ENCODE measurements at regions of chrX and their contacts with region 1.

Region 1: DNA sequence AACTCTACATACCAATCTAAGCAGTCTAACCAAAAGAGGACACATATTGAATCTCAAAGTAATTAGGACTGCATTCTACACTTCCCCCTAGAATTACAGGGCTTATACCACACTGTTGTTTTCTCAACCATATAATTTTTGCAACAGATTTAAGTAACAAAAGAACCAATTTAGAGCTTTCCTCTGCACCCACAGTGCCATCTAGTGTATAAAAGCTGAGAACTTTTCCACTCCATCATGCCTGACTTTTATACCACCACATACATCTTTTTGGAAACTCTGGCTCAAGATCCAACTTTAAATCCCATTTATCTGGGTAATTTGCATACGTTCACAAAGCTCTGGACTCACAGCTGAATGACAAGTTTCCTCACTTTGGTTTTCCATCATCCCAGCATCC is 99.5 kb downstream of the EFHC2 start:
- DNase-seq: peak in 2 of 9 experiments; percentile 39 to 55
- ATAC-seq: no peak
- H3K4me3 ChIP-seq: no peak overlapping the region
- H3K4me3 Mint-ChIP-seq: no peak overlapping the region
- H3K27ac ChIP-seq: no peak overlapping the region
- H3K27ac Mint-ChIP-seq: no peak overlapping the region
- H3K4me1 ChIP-seq: peaks cover 15% of the 10 kb centered on the region
- H3K4me1 Mint-ChIP-seq: peaks cover 28% of the 10 kb centered on the region
- H3K27me3 ChIP-seq: no peaks in the 10 kb centered on the region
- H3K27me3 Mint-ChIP-seq: no peaks in the 10 kb centered on the region
- CTCF ChIP-seq: peak; percentile 62

Region 2: GRCh38 chrX:43836435-43837184 is 407.4 kb before region 1 on chrX:
- CTCF ChIA-PET with region 1: interaction called, 7 read pairs
- POLR2A ChIA-PET with region 1: no interaction called
- intact Hi-C with region 1: loop called (anchors 2 kb)
- DNase-seq: peak in 2 of 9 experiments; percentile 15 to 36
- ATAC-seq: no peak
- H3K4me3 ChIP-seq: no peak overlapping the region
- H3K4me3 Mint-ChIP-seq: no peak overlapping the region
- H3K27ac ChIP-seq: no peak overlapping the region
- H3K27ac Mint-ChIP-seq: no peak overlapping the region
- H3K4me1 ChIP-seq: no peaks in the 10 kb centered on the region
- H3K4me1 Mint-ChIP-seq: no peaks in the 10 kb centered on the region
- H3K27me3 ChIP-seq: no peaks in the 10 kb centered on the region
- H3K27me3 Mint-ChIP-seq: no peaks in the 10 kb centered on the region
- CTCF ChIP-seq: peak; percentile 65

Region 3: GRCh38 chrX:43949669-43950068 is 294.3 kb before region 1 on chrX:
- CTCF ChIA-PET with region 1: interaction called, 10 read pairs
- POLR2A ChIA-PET with region 1: no interaction called
- intact Hi-C with region 1: no loop called
- DNase-seq: peak in 7 of 9 experiments; percentile 17 to 63 (median 27)
- ATAC-seq: peak; percentile 42
- H3K4me3 ChIP-seq: no peak overlapping the region
- H3K4me3 Mint-ChIP-seq: peak overlapping the region; percentile 47
- H3K27ac ChIP-seq: no peak overlapping the region
- H3K27ac Mint-ChIP-seq: no peak overlapping the region
- H3K4me1 ChIP-seq: no peaks in the 10 kb centered on the region
- H3K4me1 Mint-ChIP-seq: peaks cover 7% of the 10 kb centered on the region
- H3K27me3 ChIP-seq: no peaks in the 10 kb centered on the region
- H3K27me3 Mint-ChIP-seq: peaks cover 5% of the 10 kb centered on the region
- CTCF ChIP-seq: peak; percentile 24

Region 4: GRCh38 chrX:43958529-43958928 is 285.5 kb before region 1 on chrX:
- CTCF ChIA-PET with region 1: interaction called, 39 read pairs
- POLR2A ChIA-PET with region 1: interaction called, 7 read pairs
- intact Hi-C with region 1: loop called (anchors 1 kb)
- DNase-seq: peak in 4 of 9 experiments; percentile 0 to 76 (median 39)
- ATAC-seq: peak; percentile 55
- H3K4me3 ChIP-seq: no peak overlapping the region
- H3K4me3 Mint-ChIP-seq: no peak overlapping the region
- H3K27ac ChIP-seq: no peak overlapping the region
- H3K27ac Mint-ChIP-seq: no peak overlapping the region
- H3K4me1 ChIP-seq: no peaks in the 10 kb centered on the region
- H3K4me1 Mint-ChIP-seq: no peaks in the 10 kb centered on the region
- H3K27me3 ChIP-seq: no peaks in the 10 kb centered on the region
- H3K27me3 Mint-ChIP-seq: peaks cover 3% of the 10 kb centered on the region
- CTCF ChIP-seq: peak; percentile 69

Region 5: DNA sequence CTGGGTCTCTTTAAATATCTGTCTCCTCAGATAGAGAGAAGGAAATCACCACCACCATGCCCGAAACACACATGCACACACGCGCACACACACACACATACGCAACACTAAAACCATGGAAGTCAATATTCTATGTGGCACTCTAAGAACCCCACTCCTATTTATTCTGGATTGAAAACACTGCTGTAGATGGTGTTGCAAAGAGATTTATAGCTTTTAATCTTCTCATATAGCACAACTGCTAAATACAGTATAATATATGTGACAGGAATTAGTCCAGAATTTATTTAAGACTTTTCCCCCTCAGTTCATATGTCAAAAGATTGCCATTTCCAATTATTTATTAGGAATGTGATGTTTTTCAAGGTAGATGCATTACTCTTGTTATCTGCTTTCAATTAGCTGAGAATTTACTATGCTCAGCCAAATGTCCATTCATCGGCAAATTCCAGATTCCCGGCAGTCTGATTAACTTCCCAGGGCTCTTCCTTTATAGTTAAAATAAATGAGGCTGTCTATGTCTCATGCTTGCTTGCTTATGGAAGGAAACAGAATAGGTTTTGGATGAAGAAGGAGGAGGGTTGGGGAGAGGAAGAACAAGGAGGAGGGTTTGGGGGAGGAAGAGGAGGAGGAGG is 155.4 kb before region 1 on chrX:
- CTCF ChIA-PET with region 1: no interaction called
- POLR2A ChIA-PET with region 1: no interaction called
- intact Hi-C with region 1: no loop called
- DNase-seq: no peak
- ATAC-seq: no peak
- H3K4me3 ChIP-seq: no peak overlapping the region
- H3K4me3 Mint-ChIP-seq: no peak overlapping the region
- H3K27ac ChIP-seq: no peak overlapping the region
- H3K27ac Mint-ChIP-seq: no peak overlapping the region
- H3K4me1 ChIP-seq: no peaks in the 10 kb centered on the region
- H3K4me1 Mint-ChIP-seq: no peaks in the 10 kb centered on the region
- H3K27me3 ChIP-seq: no peaks in the 10 kb centered on the region
- H3K27me3 Mint-ChIP-seq: no peaks in the 10 kb centered on the region
- CTCF ChIP-seq: no peak

Region 6: GRCh38 chrX:44152852-44153251 is 91.2 kb before region 1 on chrX:
- CTCF ChIA-PET with region 1: no interaction called
- POLR2A ChIA-PET with region 1: no interaction called
- intact Hi-C with region 1: no loop called
- DNase-seq: no peak
- ATAC-seq: no peak
- H3K4me3 ChIP-seq: no peak overlapping the region
- H3K4me3 Mint-ChIP-seq: no peak overlapping the region
- H3K27ac ChIP-seq: no peak overlapping the region
- H3K27ac Mint-ChIP-seq: no peak overlapping the region
- H3K4me1 ChIP-seq: no peaks in the 10 kb centered on the region
- H3K4me1 Mint-ChIP-seq: no peaks in the 10 kb centered on the region
- H3K27me3 ChIP-seq: no peaks in the 10 kb centered on the region
- H3K27me3 Mint-ChIP-seq: no peaks in the 10 kb centered on the region
- CTCF ChIP-seq: no peak

Region 7: GRCh38 chrX:44265559-44265958 is 21.6 kb after region 1 on chrX:
- CTCF ChIA-PET with region 1: interaction called, 10 read pairs
- POLR2A ChIA-PET with region 1: no interaction called
- intact Hi-C with region 1: no loop called
- DNase-seq: peak in 1 of 9 experiments; percentile 41
- ATAC-seq: peak; percentile 34
- H3K4me3 ChIP-seq: no peak overlapping the region
- H3K4me3 Mint-ChIP-seq: peak overlapping the region; percentile 55
- H3K27ac ChIP-seq: peak overlapping the region in 1 of 2 experiments; percentile 56
- H3K27ac Mint-ChIP-seq: peak overlapping the region; percentile 72
- H3K4me1 ChIP-seq: peaks cover 23% of the 10 kb centered on the region
- H3K4me1 Mint-ChIP-seq: peaks cover 43% of the 10 kb centered on the region
- H3K27me3 ChIP-seq: no peaks in the 10 kb centered on the region
- H3K27me3 Mint-ChIP-seq: no peaks in the 10 kb centered on the region
- CTCF ChIP-seq: no peak

Region 8: GRCh38 chrX:44305921-44306735 is 62.1 kb after region 1 on chrX:
- CTCF ChIA-PET with region 1: interaction called, 18 read pairs
- POLR2A ChIA-PET with region 1: no interaction called
- intact Hi-C with region 1: loop called in 1 of 2 experiments (anchors 10 kb)
- DNase-seq: no peak
- ATAC-seq: no peak
- H3K4me3 ChIP-seq: no peak overlapping the region
- H3K4me3 Mint-ChIP-seq: no peak overlapping the region
- H3K27ac ChIP-seq: no peak overlapping the region
- H3K27ac Mint-ChIP-seq: no peak overlapping the region
- H3K4me1 ChIP-seq: peaks cover 3% of the 10 kb centered on the region
- H3K4me1 Mint-ChIP-seq: peaks cover 8% of the 10 kb centered on the region
- H3K27me3 ChIP-seq: no peaks in the 10 kb centered on the region
- H3K27me3 Mint-ChIP-seq: no peaks in the 10 kb centered on the region
- CTCF ChIP-seq: no peak

Region 9: GRCh38 chrX:44343412-44344141 is 99.6 kb after region 1 on chrX and contains the start of gene EFHC2:
- CTCF ChIA-PET with region 1: interaction called, 4 read pairs
- POLR2A ChIA-PET with region 1: no interaction called
- intact Hi-C with region 1: loop called (anchors 5 to 10 kb)
- DNase-seq: peak; percentile 26 to 82 (median 57)
- ATAC-seq: peak; percentile 55
- H3K4me3 ChIP-seq: peak within 1 kb of the TSS; percentile 51 to 65
- H3K4me3 Mint-ChIP-seq: peak within 1 kb of the TSS; percentile 93
- H3K27ac ChIP-seq: peak within 1 kb of the TSS; percentile 84 to 90
- H3K27ac Mint-ChIP-seq: peak within 1 kb of the TSS; percentile 95
- H3K4me1 ChIP-seq: peaks cover 14% of the 10 kb centered on the region
- H3K4me1 Mint-ChIP-seq: peaks cover 27% of the 10 kb centered on the region
- H3K27me3 ChIP-seq: no peaks in the 10 kb centered on the region
- H3K27me3 Mint-ChIP-seq: no peaks in the 10 kb centered on the region
- CTCF ChIP-seq: no peak
- total RNA-seq, gene EFHC2: 1.3 to 1.8 TPM

Measured in CD8-positive, alpha-beta T cell (primary cell).